H1 (cell line): ENCODE measurements at regions of chr1 and their contacts with region 1.

Region 1: DNA sequence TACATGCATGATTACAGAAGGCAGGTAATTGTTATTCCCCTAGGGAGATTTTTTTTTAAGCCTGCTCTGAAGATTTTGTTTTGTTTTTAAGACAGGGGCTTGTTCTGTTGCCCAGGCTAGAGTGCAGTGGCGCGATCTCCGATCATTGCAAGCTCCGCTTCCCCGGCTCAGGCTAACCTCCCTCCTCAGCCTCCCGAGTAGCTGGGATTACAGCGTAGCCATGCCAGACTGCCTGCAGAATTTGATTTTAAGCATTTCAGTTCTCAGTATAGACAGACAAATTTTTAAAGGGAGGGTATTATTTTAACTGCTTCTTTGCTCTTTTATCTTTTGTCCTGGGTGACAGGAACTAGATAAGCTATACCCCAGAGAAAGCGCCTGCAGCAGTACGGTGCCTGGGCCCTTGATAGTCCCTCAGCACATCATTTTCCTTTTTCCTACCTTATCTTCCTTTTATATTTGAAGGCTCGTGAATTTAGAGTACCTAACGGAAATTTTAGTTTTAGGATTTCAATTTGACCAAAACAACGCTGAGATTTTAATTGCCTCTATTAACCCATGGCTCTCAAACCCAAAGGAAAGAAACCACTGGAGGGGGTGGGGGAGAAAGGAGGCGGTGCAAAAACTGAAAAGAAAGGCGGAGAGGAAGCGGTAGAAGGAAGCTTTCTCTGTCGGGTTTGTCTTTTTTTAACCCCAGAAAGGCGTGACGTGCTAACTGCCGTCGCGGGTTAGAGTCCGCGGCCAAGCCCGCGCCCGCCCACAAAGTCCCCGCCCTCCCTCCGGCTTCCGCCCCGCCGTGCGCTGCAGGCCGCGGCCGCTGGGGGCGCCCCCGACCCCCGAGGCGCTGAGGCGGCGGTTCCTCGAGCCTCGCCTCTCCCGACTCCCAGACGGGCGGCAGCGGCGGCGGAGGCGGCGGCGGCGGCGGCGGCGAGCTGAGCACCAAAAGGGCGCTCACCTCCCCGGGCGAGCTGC is at the start of gene EEIG2:
- DNase-seq: peak; percentile 61 to 94
- H3K4me3 ChIP-seq: peak within 1 kb of the TSS; percentile 39 to 78 (median 66)
- H3K27ac ChIP-seq: no peak within 1 kb of the TSS
- H3K4me1 ChIP-seq: peaks cover 0 to 11% (median 3%) of the 10 kb centered on the region in 4 experiments; a peak in 5 of 7 replicates
- H3K27me3 ChIP-seq: no peaks in the 10 kb centered on the region
- CTCF ChIP-seq: peak; percentile 68 to 77 (median 71)
- EP300 ChIP-seq: 0 out of 3 replicates have a peak, but pooled peaks of 1 of the 2 experiments have one; percentile 33
- POLR2A ChIP-seq: peak in 1 of 2 experiments; percentile 28; a peak in 1 of 3 replicates
- RAD21 ChIP-seq: peak in 1 of 2 experiments; percentile 39; a peak in 2 of 4 replicates
- total RNA-seq, gene EEIG2: 18.1 and 20.1 TPM in 2 replicates

Region 2: DNA sequence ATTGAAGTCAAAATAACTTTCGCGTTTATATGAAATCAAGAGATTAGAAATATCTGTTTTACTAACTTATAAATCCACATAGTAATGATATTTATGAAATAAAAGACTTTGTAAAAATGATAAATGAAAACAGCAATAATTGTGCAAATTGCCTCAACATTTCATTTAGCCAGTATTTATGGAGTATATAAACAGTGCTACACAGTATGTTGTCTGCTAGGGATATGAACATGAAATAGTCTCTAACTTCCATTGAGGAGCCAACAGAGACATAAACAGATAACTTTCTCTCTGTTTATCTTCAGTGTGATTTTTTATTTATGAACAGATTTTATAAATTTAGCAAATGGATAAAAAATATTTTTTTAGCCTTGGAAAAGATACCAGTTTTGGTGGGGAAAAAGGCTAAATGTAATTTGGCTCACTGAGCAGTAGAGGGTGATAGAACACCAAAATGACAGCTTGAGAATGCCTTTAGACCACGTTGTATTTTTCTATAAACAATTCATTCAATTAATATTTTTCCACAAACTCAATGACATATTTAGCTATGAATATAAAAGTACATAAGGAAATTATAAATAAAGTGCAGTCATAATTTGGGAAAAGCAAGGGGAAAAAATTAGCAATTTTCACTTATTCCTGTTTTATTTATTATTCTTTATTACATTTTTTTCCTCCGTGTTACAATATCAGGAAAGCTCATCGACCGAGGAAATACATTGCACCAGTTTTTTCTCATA is 47.1 kb before region 1 on chr1:
- CTCF ChIA-PET with region 1: interaction called, 127 read pairs
- POLR2A ChIA-PET with region 1: no interaction called
- DNase-seq: no peak
- H3K4me3 ChIP-seq: no peak overlapping the region
- H3K27ac ChIP-seq: no peak overlapping the region
- H3K4me1 ChIP-seq: no peaks in the 10 kb centered on the region
- H3K27me3 ChIP-seq: no peaks in the 10 kb centered on the region
- CTCF ChIP-seq: peak in 2 of 3 experiments; percentile 55 to 67; a peak in 2 of 4 replicates
- EP300 ChIP-seq: no peak
- POLR2A ChIP-seq: no peak
- RAD21 ChIP-seq: peak; percentile 89 to 93

Region 3: GRCh38 chr1:108527135-108527534 is 32.4 kb before region 1 on chr1:
- CTCF ChIA-PET with region 1: interaction called, 27 read pairs
- POLR2A ChIA-PET with region 1: no interaction called
- DNase-seq: no peak
- H3K4me3 ChIP-seq: no peak overlapping the region
- H3K27ac ChIP-seq: no peak overlapping the region
- H3K4me1 ChIP-seq: no peaks in the 10 kb centered on the region
- H3K27me3 ChIP-seq: no peaks in the 10 kb centered on the region
- CTCF ChIP-seq: no peak
- EP300 ChIP-seq: no peak
- POLR2A ChIP-seq: no peak
- RAD21 ChIP-seq: no peak

Region 4: DNA sequence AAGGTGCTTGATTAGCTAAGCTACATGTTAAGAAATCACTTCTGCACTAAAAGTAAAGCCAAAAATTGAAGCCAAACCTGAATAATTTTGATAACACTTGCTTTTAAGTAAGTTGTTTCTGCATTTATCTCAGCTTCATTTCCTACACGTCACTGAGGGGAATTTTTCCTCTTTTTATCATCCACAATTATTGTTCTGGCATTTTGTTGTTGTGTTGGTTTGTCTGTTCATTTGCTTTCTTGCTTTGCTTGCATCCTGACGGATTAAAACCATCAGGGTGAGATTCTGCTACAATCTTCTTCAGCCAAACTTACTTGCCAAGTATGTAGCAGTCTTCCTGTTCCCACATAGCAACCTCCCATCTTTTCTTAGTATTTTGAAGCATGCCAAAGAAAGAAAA is 17.6 kb before region 1 on chr1:
- CTCF ChIA-PET with region 1: interaction called, 27 read pairs
- POLR2A ChIA-PET with region 1: no interaction called
- DNase-seq: no peak
- H3K4me3 ChIP-seq: no peak overlapping the region
- H3K27ac ChIP-seq: no peak overlapping the region
- H3K4me1 ChIP-seq: peaks cover 0 to 6% (median 0%) of the 10 kb centered on the region in 4 experiments; a peak in 1 of 7 replicates
- H3K27me3 ChIP-seq: no peaks in the 10 kb centered on the region
- CTCF ChIP-seq: no peak
- EP300 ChIP-seq: no peak
- POLR2A ChIP-seq: no peak
- RAD21 ChIP-seq: no peak

Region 5: DNA sequence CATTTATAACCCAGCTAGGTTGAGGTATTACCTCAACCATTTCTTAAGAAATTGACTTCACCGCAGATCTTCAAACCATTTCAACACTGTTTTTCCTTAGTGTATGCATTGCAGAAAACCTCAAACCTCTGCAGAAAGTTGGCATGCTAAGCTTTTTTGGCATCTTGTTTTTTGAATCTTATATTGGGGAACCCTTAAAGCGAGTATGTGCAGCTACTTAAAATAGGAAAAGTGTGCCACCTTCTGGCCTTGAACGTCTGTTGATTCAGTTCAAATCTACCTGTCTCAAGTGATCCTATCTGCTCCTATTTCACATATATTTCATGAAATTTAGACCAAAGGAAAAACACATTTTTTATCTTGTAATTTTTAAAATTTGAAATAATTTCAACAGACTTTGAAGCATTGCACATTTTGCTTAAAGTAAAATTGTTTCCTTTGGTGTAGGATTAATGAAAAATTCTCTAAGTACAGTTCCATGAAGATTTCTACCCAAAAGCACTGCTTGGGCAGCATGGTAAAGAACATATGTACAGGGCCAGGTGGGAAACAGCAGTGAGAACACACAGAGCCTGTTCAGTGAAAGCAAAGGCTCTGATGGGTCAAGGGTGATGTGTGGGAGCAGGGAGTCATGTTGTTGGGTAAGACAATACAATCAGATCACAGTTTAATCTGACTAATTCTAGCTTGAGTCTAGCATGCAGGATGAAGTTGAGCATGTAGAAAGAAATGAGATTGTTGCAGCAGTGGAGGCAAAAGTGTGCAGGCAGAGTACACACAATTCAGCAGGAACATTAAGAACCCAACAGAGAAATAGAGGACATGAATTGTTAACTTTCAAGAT is 84.2 kb after region 1 on chr1:
- CTCF ChIA-PET with region 1: interaction called, 21 read pairs
- POLR2A ChIA-PET with region 1: no interaction called
- DNase-seq: no peak
- H3K4me3 ChIP-seq: no peak overlapping the region
- H3K27ac ChIP-seq: no peak overlapping the region
- H3K4me1 ChIP-seq: no peaks in the 10 kb centered on the region
- H3K27me3 ChIP-seq: peaks cover 0 to 1% (median 0%) of the 10 kb centered on the region in 4 experiments; a peak in 1 of 7 replicates
- CTCF ChIP-seq: peak in 2 of 3 experiments; percentile 35 to 57; a peak in 2 of 4 replicates
- EP300 ChIP-seq: no peak
- POLR2A ChIP-seq: no peak
- RAD21 ChIP-seq: peak; percentile 77 to 79

Region 6: DNA sequence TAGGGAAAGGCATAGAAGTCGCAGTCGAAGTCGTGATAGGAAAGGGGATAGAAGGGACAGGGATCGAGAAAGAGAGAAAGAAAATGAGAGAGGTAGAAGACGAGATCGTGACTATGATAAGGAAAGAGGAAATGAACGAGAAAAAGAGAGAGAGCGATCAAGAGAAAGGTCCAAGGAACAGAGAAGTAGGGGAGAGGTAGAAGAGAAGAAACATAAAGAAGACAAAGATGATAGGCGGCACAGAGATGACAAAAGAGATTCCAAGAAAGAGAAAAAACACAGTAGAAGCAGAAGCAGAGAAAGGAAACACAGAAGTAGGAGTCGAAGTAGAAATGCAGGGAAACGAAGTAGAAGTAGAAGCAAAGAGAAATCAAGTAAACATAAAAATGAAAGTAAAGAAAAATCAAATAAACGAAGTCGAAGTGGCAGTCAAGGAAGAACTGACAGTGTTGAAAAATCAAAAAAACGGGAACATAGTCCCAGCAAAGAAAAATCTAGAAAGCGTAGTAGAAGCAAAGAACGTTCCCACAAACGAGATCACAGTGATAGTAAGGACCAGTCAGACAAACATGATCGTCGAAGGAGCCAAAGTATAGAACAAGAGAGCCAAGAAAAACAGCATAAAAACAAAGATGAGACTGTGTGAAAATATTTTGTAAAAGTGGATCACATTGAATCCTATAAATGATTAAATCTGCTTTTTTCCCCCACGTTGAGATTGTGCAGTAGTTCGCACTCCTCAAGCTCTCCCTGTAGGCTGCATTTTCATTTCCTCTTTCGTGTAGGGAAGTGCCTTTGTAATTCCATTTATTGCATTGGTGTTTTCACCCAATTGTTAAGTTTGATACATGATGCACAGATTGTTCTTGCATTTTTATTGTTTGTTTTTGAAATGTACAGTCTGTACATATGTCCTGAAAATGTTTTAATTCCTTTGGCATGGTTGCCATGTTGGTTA is 140.2 kb after region 1 on chr1:
- CTCF ChIA-PET with region 1: no interaction called
- POLR2A ChIA-PET with region 1: no interaction called
- DNase-seq: no peak
- H3K4me3 ChIP-seq: no peak overlapping the region
- H3K27ac ChIP-seq: no peak overlapping the region
- H3K4me1 ChIP-seq: peaks cover 0 to 2% (median 0%) of the 10 kb centered on the region in 4 experiments; a peak in 1 of 7 replicates
- H3K27me3 ChIP-seq: no peaks in the 10 kb centered on the region
- CTCF ChIP-seq: no peak
- EP300 ChIP-seq: no peak
- POLR2A ChIP-seq: peak in 1 of 2 experiments; percentile 31; a peak in 1 of 3 replicates
- RAD21 ChIP-seq: no peak